ENCODE measurements at regions of chr6 and their contacts with region 1.

Region 1: DNA sequence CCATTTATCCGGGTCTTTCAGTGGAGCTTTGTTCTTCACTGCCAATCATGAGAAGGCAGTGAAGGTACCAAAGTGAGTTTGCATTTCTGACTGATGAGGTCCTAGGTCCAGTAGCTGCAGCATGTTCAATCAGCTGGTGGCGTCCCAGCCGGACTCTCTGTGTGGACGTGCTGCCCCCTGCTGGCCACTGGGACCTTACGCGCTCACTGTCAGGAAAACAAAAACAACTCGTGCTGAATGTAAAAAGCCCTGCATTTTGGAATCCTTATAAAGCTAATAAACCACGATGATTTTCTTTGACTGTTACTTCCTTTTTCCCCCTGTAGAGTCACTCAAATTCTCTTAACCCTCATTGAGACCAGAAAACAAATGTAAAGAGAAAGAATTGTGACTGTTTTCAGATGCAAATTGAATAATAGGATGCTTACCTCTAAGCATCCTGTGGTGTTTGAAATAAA is 4.9 kb upstream of the CD24 start:
- DNase-seq: peak; percentile 80 to 89
- H3K4me3 ChIP-seq: no peak overlapping the region
- H3K4me3 Mint-ChIP-seq: no peak overlapping the region
- H3K27ac Mint-ChIP-seq: no peak overlapping the region
- H3K4me1 ChIP-seq: peaks cover 11% of the 10 kb centered on the region; the same call in 1 of the 2 replicates
- H3K4me1 Mint-ChIP-seq: no peaks in the 10 kb centered on the region
- H3K27me3 ChIP-seq: no peaks in the 10 kb centered on the region
- H3K27me3 Mint-ChIP-seq: no peaks in the 10 kb centered on the region
- CTCF ChIP-seq: peak; percentile 95 to 98

Region 2: DNA sequence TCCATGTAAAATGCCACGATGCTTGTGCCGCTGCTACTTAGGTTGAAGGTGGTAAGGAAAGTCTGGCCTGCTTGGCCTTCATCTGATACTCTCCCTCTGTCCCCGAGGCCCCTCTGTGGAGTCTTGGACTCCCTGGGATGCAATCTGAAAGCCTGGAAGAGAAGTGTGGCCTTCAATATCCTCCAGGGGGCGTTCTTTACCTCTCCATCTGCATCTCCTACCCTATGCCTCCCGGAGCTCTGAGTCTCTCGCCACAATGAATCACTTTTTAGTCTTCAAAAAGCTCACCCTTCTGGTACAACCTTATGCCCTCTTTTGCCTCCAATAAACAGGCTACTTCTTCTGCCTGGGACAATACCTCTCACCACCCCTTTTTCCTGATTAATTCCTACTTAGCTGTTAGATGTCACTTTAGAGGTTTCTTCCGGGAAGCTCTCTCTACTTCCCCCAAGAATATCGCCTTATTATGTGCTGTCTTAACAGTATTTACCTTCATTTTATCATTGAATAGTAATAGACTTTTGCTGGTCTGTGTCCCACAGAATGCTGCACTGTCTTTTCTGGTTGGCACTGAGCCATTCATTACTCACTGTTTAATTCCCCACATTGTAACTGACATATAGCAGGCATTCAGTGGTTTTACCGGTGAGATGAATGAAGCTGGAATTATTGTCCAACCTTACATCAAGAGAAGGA is 640.0 kb before region 1 on chr6:
- CTCF ChIA-PET with region 1: interaction called, 5 read pairs
- POLR2A ChIA-PET with region 1: no interaction called
- intact Hi-C with region 1: loop called (anchors 1 kb)
- DNase-seq: peak; percentile 56 to 66
- H3K4me3 ChIP-seq: no peak overlapping the region
- H3K4me3 Mint-ChIP-seq: no peak overlapping the region
- H3K27ac Mint-ChIP-seq: no peak overlapping the region
- H3K4me1 ChIP-seq: no peaks in the 10 kb centered on the region
- H3K4me1 Mint-ChIP-seq: peaks cover 6% of the 10 kb centered on the region
- H3K27me3 ChIP-seq: no peaks in the 10 kb centered on the region
- H3K27me3 Mint-ChIP-seq: peaks cover 6% of the 10 kb centered on the region
- CTCF ChIP-seq: peak; percentile 75 to 84

Region 3: DNA sequence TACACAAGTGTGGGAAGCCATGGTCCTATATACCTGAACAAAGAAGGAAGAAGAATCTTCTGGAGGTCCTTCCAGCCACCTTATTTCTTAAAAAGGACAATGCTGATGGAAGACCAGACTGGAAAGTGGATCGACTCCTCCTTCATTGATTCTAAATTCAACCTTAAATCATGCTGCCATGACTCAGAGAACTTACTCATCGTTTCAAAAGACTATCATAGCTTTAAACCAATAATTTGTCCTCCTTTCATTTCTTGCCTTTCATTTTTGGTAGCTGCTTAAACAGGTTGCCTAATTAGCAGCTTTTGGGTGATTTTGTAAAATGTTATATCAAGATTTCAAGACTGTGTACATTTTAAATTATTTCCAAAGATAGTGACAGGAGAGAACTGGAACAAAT is 410.9 kb before region 1 on chr6:
- CTCF ChIA-PET with region 1: interaction called, 3 read pairs
- POLR2A ChIA-PET with region 1: no interaction called
- intact Hi-C with region 1: loop called (anchors 5 kb)
- DNase-seq: no peak
- H3K4me3 ChIP-seq: no peak overlapping the region
- H3K4me3 Mint-ChIP-seq: no peak overlapping the region
- H3K27ac Mint-ChIP-seq: no peak overlapping the region
- H3K4me1 ChIP-seq: no peaks in the 10 kb centered on the region
- H3K4me1 Mint-ChIP-seq: peaks cover 5% of the 10 kb centered on the region
- H3K27me3 ChIP-seq: no peaks in the 10 kb centered on the region
- H3K27me3 Mint-ChIP-seq: no peaks in the 10 kb centered on the region
- CTCF ChIP-seq: no peak

Region 4: GRCh38 chr6:106629103-106629858 is 350.2 kb before region 1 on chr6 and contains the starts of genes QRSL1 and RTN4IP1:
- CTCF ChIA-PET with region 1: no interaction called
- POLR2A ChIA-PET with region 1: no interaction called
- intact Hi-C with region 1: loop called (anchors 5 kb)
- DNase-seq: peak; percentile 90
- H3K4me3 ChIP-seq: peak within 1 kb of the TSS; percentile 54
- H3K4me3 Mint-ChIP-seq: peak within 1 kb of the TSS; percentile 89
- H3K27ac Mint-ChIP-seq: peak within 1 kb of the TSS; percentile 94
- H3K4me1 ChIP-seq: peaks cover 4% of the 10 kb centered on the region
- H3K4me1 Mint-ChIP-seq: peaks cover 6% of the 10 kb centered on the region
- H3K27me3 ChIP-seq: no peaks in the 10 kb centered on the region
- H3K27me3 Mint-ChIP-seq: no peaks in the 10 kb centered on the region
- CTCF ChIP-seq: no peak
- total RNA-seq, gene QRSL1: 19.0 and 19.5 TPM in 2 replicates
- total RNA-seq, gene RTN4IP1: 10.8 and 11.2 TPM in 2 replicates

Region 5: GRCh38 chr6:106799008-106799894 is 180.2 kb before region 1 on chr6:
- CTCF ChIA-PET with region 1: no interaction called
- POLR2A ChIA-PET with region 1: no interaction called
- intact Hi-C with region 1: loop called (anchors 2 kb)
- DNase-seq: peak; percentile 84 to 92
- H3K4me3 ChIP-seq: no peak overlapping the region
- H3K4me3 Mint-ChIP-seq: peak overlapping the region; percentile 65
- H3K27ac Mint-ChIP-seq: peak overlapping the region; percentile 95
- H3K4me1 ChIP-seq: peaks cover 56% of the 10 kb centered on the region
- H3K4me1 Mint-ChIP-seq: peaks cover 24% of the 10 kb centered on the region
- H3K27me3 ChIP-seq: no peaks in the 10 kb centered on the region
- H3K27me3 Mint-ChIP-seq: no peaks in the 10 kb centered on the region
- CTCF ChIP-seq: no peak

Region 6: DNA sequence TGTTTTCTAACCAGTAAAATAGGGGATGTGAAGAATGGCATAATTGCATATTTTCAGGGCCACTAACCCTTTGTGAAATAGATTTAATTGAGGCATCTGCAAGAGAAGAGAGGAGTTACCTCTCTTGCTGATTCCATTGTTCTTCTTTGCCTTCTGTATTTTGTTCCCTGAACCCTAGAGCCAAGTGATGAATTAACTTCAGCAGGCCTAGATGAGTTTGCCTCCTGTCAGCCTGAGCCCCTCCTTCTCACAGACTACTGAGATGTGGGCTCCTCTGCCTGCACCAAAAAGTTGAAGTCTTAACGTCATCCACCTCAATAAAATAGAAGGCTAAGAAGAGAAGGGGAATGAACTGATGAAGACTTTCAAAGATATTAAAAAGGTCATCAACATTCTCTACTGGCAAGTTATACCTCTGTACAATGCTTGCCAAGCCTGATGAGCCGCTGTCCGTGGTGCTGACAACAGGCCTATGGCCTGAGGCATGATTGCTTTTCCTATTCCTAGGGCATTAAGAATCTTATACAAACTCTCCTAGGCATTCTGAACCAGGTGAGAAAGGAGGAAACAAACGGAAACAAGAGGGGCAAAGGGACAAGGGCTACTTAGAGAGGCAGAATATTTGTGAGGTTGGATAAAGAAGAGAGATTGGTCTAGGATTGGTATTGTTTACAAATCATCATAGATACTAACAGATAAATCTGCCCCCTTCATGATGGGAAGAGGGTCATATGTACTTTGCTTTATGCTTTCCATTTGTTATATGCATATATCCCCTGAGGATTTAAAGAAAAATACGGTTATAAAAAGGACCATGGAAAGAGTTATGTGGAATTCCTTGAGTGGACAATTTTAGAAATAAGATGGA is 51.7 kb before region 1 on chr6:
- CTCF ChIA-PET with region 1: no interaction called
- POLR2A ChIA-PET with region 1: no interaction called
- intact Hi-C with region 1: loop called (anchors 5 kb)
- DNase-seq: peak; percentile 69 to 81
- H3K4me3 ChIP-seq: no peak overlapping the region
- H3K4me3 Mint-ChIP-seq: no peak overlapping the region
- H3K27ac Mint-ChIP-seq: no peak overlapping the region
- H3K4me1 ChIP-seq: peaks cover 25% of the 10 kb centered on the region
- H3K4me1 Mint-ChIP-seq: peaks cover 13% of the 10 kb centered on the region
- H3K27me3 ChIP-seq: no peaks in the 10 kb centered on the region
- H3K27me3 Mint-ChIP-seq: no peaks in the 10 kb centered on the region
- CTCF ChIP-seq: no peak

Measured in Caco-2 (cell line).